ENCODE measurements at regions of chr20 and their contacts with region 1.

Region 1: GRCh38 chr20:62143118-62143973 is at the starts of genes PSMA7 and SS18L1:
- DNase-seq: peak; percentile 88 to 90
- ATAC-seq: peak; percentile 88 to 95 (median 92)
- H3K4me3 ChIP-seq: peak within 1 kb of the TSS; percentile 67 to 96 (median 86)
- H3K27ac ChIP-seq: peak within 1 kb of the TSS; percentile 86 to 100 (median 96)
- H3K4me1 ChIP-seq: peaks cover 8 to 46% (median 38%) of the 10 kb centered on the region in 9 donors
- H3K27me3 ChIP-seq: no peaks in the 10 kb centered on the region
- CTCF ChIP-seq: no peak
- total RNA-seq, gene PSMA7: 172 to 296 (median 200) TPM
- total RNA-seq, gene SS18L1: 6.6 to 11.7 (median 7.4) TPM

Region 2: DNA sequence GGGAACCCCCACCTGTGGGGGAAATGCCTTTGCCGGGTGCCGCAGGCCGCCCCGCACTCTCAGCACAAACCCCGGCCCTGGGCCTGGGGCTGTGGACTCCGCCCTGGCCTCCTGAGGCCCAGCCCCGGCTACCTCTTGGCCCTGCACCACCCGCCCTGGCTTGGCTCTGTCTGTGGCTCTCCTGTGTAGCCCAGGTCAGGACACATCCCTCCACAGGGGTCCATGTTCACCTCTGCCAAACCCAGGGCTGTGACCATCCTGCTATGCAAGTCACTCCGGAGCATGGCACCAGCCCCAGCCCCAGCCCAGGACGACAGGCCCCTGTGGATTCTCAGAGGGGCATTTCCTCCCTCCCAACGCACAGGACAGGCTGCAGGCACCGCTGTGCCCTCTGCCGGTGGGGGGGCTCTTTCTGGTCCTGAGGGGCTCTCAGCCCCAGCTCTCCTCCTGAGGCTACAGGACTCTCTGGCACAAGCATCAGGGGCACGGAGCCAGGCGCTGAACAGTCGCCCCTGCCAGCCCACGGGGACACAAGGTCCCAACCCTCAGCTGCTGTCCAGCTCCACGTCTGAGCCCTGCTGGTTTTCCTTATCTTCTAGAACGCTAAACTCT is 123.4 kb before region 1 on chr20:
- intact Hi-C with region 1: loop called in 8 of 10 experiments (anchors 5 kb)
- DNase-seq: peak; percentile 51 to 73
- ATAC-seq: peak; percentile 51 to 91 (median 70)
- H3K4me3 ChIP-seq: no peak overlapping the region
- H3K27ac ChIP-seq: peak overlapping the region in 4 of 10 donors; percentile 2 to 22 (median 18)
- H3K4me1 ChIP-seq: peaks cover 20 to 68% (median 38%) of the 10 kb centered on the region in 9 donors
- H3K27me3 ChIP-seq: no peaks in the 10 kb centered on the region
- CTCF ChIP-seq: no peak

Region 3: GRCh38 chr20:62065669-62066338 is 77.5 kb before region 1 on chr20 and contains the start of gene TAF4:
- intact Hi-C with region 1: loop called in 6 of 10 experiments (anchors 2 to 5 kb)
- DNase-seq: peak; percentile 67 to 81
- ATAC-seq: peak; percentile 28 to 78 (median 64)
- H3K4me3 ChIP-seq: peak within 1 kb of the TSS; percentile 57 to 88 (median 72)
- H3K27ac ChIP-seq: peak within 1 kb of the TSS; percentile 88 to 98 (median 92)
- H3K4me1 ChIP-seq: peaks cover 8 to 45% (median 35%) of the 10 kb centered on the region in 9 donors
- H3K27me3 ChIP-seq: no peaks in the 10 kb centered on the region
- CTCF ChIP-seq: no peak
- total RNA-seq, gene TAF4: 8.6 to 14.8 (median 11.8) TPM

Region 4: GRCh38 chr20:62182613-62183425 is 39.5 kb after region 1 on chr20 and contains the start of gene MTG2:
- intact Hi-C with region 1: loop called in 4 of 10 experiments (anchors 1 to 5 kb)
- DNase-seq: peak; percentile 95
- ATAC-seq: peak; percentile 97 to 99 (median 98)
- H3K4me3 ChIP-seq: peak within 1 kb of the TSS; percentile 51 to 98 (median 92)
- H3K27ac ChIP-seq: peak within 1 kb of the TSS; percentile 79 to 98 (median 94)
- H3K4me1 ChIP-seq: peaks cover 0 to 52% (median 29%) of the 10 kb centered on the region in 9 donors
- H3K27me3 ChIP-seq: no peaks in the 10 kb centered on the region
- CTCF ChIP-seq: peak in 2 of 9 donors; percentile 13 to 15
- total RNA-seq, gene MTG2: 21.5 to 30.4 (median 28.2) TPM

Region 5: GRCh38 chr20:62219992-62220665 is 76.8 kb after region 1 on chr20 and contains the start of gene HRH3:
- intact Hi-C with region 1: no loop called
- DNase-seq: peak in 1 of 2 donors; percentile 52
- ATAC-seq: peak; percentile 61 to 85 (median 79)
- H3K4me3 ChIP-seq: peak within 1 kb of the TSS in 8 of 10 donors; percentile 15 to 43 (median 29)
- H3K27ac ChIP-seq: no peak within 1 kb of the TSS
- H3K4me1 ChIP-seq: peaks cover 3 to 23% (median 12%) of the 10 kb centered on the region in 9 donors
- H3K27me3 ChIP-seq: peaks cover 38 to 93% (median 88%) of the 10 kb centered on the region in 7 donors
- CTCF ChIP-seq: no peak
- total RNA-seq, gene HRH3: not detected